Activated B cell treated with CpG ODN at 0.5 μM for 24 hours (primary cell): ENCODE measurements at regions of chr12 and their contacts with region 1.

Region 1: GRCh38 chr12:40232602-40233001 is 7.8 kb downstream of the LRRK2 start:
- DNase-seq: no peak
- ATAC-seq: peak; percentile 45
- H3K4me3 Mint-ChIP-seq: peak overlapping the region; percentile 32
- H3K27ac Mint-ChIP-seq: peak overlapping the region; percentile 76
- H3K4me1 Mint-ChIP-seq: peaks cover 68% of the 10 kb centered on the region
- H3K27me3 Mint-ChIP-seq: no peaks in the 10 kb centered on the region
- CTCF ChIP-seq: no peak

Region 2: DNA sequence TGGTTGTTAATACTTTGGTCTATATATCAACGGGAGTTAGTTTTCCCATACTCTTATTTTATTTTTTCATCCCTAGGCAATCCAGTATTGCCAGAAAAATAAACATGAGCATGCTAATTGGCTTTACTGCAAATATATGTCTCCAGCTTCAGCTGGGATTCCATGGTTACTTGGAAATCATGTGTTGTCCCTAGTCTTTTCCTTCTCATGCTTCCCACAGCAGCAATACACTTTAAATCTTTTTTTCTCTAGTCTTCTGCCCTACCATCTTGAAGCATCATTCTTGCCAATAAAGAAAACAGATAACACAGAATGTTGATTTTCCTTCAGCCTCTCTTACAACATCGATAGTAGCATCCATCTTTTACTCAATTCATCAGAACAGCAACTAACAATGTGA is 186.9 kb before region 1 on chr12:
- CTCF ChIA-PET with region 1: no interaction called
- POLR2A ChIA-PET with region 1: no interaction called
- intact Hi-C with region 1: no loop called
- DNase-seq: no peak
- ATAC-seq: no peak
- H3K4me3 Mint-ChIP-seq: no peak overlapping the region
- H3K27ac Mint-ChIP-seq: no peak overlapping the region
- H3K4me1 Mint-ChIP-seq: no peaks in the 10 kb centered on the region
- H3K27me3 Mint-ChIP-seq: no peaks in the 10 kb centered on the region
- CTCF ChIP-seq: no peak

Region 3: GRCh38 chr12:40158592-40159111 is 74.0 kb before region 1 on chr12:
- CTCF ChIA-PET with region 1: interaction called, 4 read pairs
- POLR2A ChIA-PET with region 1: interaction called, 17 read pairs
- intact Hi-C with region 1: no loop called
- DNase-seq: no peak
- ATAC-seq: peak; percentile 76
- H3K4me3 Mint-ChIP-seq: peak overlapping the region; percentile 69
- H3K27ac Mint-ChIP-seq: peak overlapping the region; percentile 87
- H3K4me1 Mint-ChIP-seq: peaks cover 56% of the 10 kb centered on the region
- H3K27me3 Mint-ChIP-seq: no peaks in the 10 kb centered on the region
- CTCF ChIP-seq: no peak

Region 4: DNA sequence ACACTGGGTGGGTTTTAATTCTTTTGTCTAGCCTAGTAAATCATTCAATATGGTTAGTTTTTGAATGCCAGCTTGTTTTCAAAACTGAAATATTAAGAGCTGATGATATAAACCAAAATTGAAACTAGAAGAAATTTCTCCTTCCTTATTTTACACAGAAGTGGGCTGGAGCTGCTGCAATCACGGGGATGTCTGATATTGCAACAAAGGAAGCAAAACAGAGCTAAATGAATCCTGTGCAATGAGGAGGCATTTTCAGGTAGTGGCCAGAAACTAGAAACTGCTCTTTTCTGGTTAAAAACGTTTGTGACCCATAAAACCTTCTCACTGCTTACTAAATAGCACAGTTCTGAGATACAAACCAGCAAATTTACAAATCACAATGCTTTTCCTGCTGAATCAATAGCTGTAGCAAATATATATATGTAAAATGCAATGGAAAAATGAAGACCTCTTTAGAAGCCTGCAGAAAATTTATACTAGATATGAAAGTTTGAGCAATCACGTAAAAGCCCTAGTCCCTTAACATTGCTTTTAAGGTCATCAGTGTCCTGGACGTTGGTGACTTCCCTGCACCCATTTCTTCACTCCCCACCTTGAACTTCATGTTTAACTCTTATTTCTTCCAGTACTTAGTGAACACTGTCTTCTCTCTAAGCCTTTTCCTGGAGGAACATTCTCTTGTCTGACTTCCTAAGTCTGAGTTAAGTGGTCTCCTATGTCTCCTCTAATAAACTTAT is 23.7 kb before region 1 on chr12:
- CTCF ChIA-PET with region 1: interaction called, 4 read pairs
- POLR2A ChIA-PET with region 1: interaction called, 14 read pairs
- intact Hi-C with region 1: no loop called
- DNase-seq: no peak
- ATAC-seq: peak; percentile 94
- H3K4me3 Mint-ChIP-seq: peak overlapping the region; percentile 61
- H3K27ac Mint-ChIP-seq: peak overlapping the region; percentile 90
- H3K4me1 Mint-ChIP-seq: peaks cover 28% of the 10 kb centered on the region
- H3K27me3 Mint-ChIP-seq: no peaks in the 10 kb centered on the region
- CTCF ChIP-seq: no peak

Region 5: DNA sequence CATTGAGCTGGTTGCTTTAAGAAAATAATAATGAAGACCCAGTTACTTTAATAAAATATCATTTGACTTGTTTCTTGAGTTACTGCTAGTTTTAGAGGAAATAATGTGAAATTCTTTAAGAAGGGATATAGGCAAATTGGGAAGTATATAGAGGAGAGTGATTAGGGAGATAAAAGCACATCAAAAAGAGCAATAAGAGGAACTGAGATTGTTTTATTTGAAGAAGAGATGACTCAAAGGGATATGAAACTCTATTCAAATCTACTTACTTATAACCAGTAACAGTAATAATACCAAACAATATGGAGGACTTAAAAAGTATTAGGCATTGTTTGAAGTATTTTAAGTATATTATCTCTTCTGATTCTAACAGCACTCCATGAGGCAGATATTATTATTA is 29.3 kb after region 1 on chr12:
- CTCF ChIA-PET with region 1: no interaction called
- POLR2A ChIA-PET with region 1: interaction called, 6 read pairs
- intact Hi-C with region 1: loop called (anchors 1 kb)
- DNase-seq: no peak
- ATAC-seq: peak; percentile 73
- H3K4me3 Mint-ChIP-seq: peak overlapping the region; percentile 75
- H3K27ac Mint-ChIP-seq: peak overlapping the region; percentile 92
- H3K4me1 Mint-ChIP-seq: peaks cover 41% of the 10 kb centered on the region
- H3K27me3 Mint-ChIP-seq: no peaks in the 10 kb centered on the region
- CTCF ChIP-seq: no peak